Heart left ventricle (tissue), 16 donors: ENCODE measurements at regions of chr5 and their contacts with region 1.

Region 1: DNA sequence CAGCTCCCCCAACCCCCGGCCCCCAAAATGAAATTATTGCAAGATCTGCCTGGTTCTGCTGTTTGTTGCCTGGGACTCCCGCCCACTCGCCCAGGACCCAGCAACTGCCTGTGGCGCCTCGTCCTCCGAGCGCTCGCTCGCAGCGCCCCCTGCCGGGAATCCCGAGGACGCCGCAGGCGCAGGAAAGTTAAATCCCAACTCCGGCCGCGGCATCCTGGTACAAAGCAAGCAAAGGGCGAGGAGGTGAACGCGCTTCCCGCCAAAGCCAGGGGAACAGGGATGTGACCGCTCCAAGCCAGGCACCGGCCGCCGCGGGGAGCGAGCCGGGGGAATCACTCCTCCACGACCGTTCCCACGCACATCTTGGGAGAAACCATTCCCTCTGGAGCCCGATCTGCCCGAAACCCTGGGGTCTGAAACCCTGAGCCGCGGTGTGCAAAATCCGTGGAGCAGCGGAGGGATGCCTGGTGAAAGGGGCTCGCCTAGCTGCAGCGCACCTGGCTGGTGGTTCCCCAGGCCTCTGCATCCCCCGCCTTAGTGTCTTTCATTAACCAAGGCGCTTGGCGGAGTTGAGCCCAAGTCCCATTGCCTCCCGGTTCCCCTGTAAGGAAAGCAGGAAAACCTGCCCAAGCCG is 1.3 kb downstream of the SEMA5A start:
- DNase-seq: peak; percentile 83 to 92 (median 86)
- ATAC-seq: peak; percentile 72 to 78 (median 76)
- H3K4me3 ChIP-seq: peak overlapping the region; percentile 65 to 94 (median 78)
- H3K27ac ChIP-seq: peak overlapping the region; percentile 34 to 94 (median 83)
- H3K4me1 ChIP-seq: peaks cover 0 to 57% (median 12%) of the 10 kb centered on the region in 12 donors
- H3K27me3 ChIP-seq: peaks cover 0 to 29% (median 0%) of the 10 kb centered on the region in 9 donors
- CTCF ChIP-seq: peak; percentile 69 to 91 (median 78)
- POLR2A ChIP-seq: peak in 1 of 2 donors; percentile 39

Region 2: GRCh38 chr5:9156282-9156681 is 388.3 kb before region 1 on chr5:
- intact Hi-C with region 1: loop called in 3 of 10 experiments (anchors 10 kb)
- DNase-seq: peak in 2 of 5 donors; percentile 14 to 36
- ATAC-seq: peak in 3 of 4 donors; percentile 61 to 72 (median 70)
- H3K4me3 ChIP-seq: no peak overlapping the region
- H3K27ac ChIP-seq: no peak overlapping the region
- H3K4me1 ChIP-seq: peaks cover 0 to 13% (median 2%) of the 10 kb centered on the region in 12 donors
- H3K27me3 ChIP-seq: no peaks in the 10 kb centered on the region
- CTCF ChIP-seq: peak in 9 of 12 donors; percentile 8 to 51 (median 30)
- POLR2A ChIP-seq: no peak

Region 3: DNA sequence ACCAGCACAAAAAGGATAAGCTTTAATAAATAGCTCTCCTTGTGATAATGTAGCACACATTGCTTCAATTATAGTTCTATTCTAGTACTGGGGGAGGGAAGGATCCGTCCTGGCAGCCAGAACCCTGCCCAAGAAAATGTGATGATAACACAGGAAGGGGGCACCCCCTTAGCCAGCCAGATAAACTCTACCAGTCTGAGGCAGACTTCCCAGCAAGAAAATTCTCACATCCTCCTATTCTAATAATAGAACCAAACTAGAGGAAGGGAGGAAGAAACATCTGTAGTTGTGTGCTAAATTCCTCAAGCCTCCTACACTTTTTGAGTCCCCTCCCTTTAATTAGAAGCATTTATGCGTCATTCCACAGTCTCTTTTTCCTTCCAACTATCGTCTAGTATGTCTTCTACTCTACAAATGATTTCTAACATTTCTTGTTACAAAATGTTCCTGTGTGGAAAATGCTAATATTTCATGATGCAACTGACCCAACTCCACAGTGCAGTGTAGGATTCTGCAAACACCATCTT is 259.8 kb before region 1 on chr5:
- intact Hi-C with region 1: loop called in 5 of 10 experiments (anchors 5 to 10 kb)
- DNase-seq: peak in 4 of 5 donors; percentile 46 to 65 (median 52)
- ATAC-seq: peak; percentile 84 to 93 (median 90)
- H3K4me3 ChIP-seq: no peak overlapping the region
- H3K27ac ChIP-seq: peak overlapping the region; percentile 21 to 77 (median 60)
- H3K4me1 ChIP-seq: peaks cover 0 to 36% (median 15%) of the 10 kb centered on the region in 12 donors
- H3K27me3 ChIP-seq: no peaks in the 10 kb centered on the region
- CTCF ChIP-seq: no peak
- POLR2A ChIP-seq: no peak

Region 4: GRCh38 chr5:9437741-9438240 is 106.8 kb before region 1 on chr5:
- intact Hi-C with region 1: loop called in 1 of 10 experiments (anchors 10 kb)
- DNase-seq: no peak
- ATAC-seq: peak in 1 of 4 donors; percentile 33
- H3K4me3 ChIP-seq: no peak overlapping the region
- H3K27ac ChIP-seq: no peak overlapping the region
- H3K4me1 ChIP-seq: peaks cover 0 to 27% (median 12%) of the 10 kb centered on the region in 12 donors
- H3K27me3 ChIP-seq: no peaks in the 10 kb centered on the region
- CTCF ChIP-seq: no peak
- POLR2A ChIP-seq: no peak

Region 5: DNA sequence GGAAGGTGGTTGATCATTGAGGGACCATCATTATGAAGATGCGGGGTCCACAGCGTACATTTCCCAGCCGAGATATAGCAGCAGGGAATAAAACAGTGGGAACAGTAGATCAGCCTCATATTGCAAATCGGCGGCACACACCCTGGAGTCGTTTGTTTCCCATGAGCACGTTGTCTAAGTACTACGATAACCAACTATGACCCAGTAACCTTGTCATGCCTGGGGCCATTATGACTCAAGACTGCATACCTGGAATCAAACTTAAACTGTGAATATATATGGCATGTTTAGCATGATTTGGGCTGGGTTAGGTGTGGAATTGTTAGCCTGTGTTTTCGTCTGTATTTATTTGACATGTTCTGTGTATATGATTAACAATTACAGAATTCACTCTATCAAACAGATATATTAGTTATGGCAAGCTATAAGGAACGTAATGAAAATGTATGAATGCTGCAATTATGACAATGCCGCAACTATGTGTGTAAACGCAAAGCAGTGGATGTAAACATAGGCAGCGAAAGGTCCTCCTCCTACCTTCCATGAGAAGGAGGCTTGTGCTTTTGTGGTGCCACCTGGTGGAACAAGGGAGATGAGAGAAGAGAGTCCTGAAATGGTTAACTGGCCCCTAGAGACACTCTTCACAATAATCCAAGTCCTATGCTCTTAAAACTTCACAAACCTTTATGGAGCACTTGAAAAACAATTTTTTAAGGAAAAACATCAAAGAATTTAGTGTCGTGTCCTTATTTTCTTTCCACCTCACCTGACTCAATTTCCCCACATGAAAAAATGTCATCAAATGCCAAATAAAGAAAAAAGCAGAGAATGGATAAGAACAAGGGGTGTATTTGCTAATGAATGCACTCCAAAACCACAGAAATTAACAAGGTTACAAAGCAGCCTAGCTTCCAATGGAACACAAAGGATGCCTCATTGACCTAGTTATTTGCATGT is 45.8 kb before region 1 on chr5:
- intact Hi-C with region 1: loop called in 2 of 10 experiments (anchors 5 kb)
- DNase-seq: no peak
- ATAC-seq: no peak
- H3K4me3 ChIP-seq: no peak overlapping the region
- H3K27ac ChIP-seq: peak overlapping the region in 2 of 12 donors; percentile 7 to 32
- H3K4me1 ChIP-seq: peaks cover 0 to 40% (median 19%) of the 10 kb centered on the region in 12 donors
- H3K27me3 ChIP-seq: no peaks in the 10 kb centered on the region
- CTCF ChIP-seq: peak in 7 of 12 donors; percentile 12 to 40 (median 23)
- POLR2A ChIP-seq: no peak

Region 6: DNA sequence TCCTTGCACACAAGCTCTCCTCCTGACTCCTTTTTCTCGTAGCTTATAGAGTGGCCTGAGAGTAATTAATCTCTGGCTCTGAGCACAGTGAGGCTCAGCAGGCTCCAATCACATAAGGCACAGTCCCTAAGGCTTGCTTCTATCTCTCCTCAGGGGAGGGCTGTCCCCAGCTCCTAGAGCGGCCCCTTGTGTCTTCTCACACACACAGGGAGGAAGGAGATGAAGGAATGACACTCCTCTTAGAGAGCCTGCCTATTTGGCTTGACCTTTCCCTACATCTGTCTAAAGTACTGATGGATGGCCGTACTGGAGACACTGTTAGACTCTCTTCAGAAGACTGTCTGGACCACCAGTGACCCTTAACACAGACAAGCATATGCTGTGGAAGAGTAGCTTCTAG is 72.6 kb after region 1 on chr5:
- intact Hi-C with region 1: loop called in 3 of 10 experiments (anchors 5 kb)
- DNase-seq: no peak
- ATAC-seq: peak in 3 of 4 donors; percentile 28 to 45 (median 30)
- H3K4me3 ChIP-seq: no peak overlapping the region
- H3K27ac ChIP-seq: peak overlapping the region in 1 of 12 donors; percentile 14
- H3K4me1 ChIP-seq: peaks cover 0 to 19% (median 10%) of the 10 kb centered on the region in 12 donors
- H3K27me3 ChIP-seq: no peaks in the 10 kb centered on the region
- CTCF ChIP-seq: no peak
- POLR2A ChIP-seq: no peak

Region 7: GRCh38 chr5:9686211-9686610 is 141.6 kb after region 1 on chr5:
- intact Hi-C with region 1: no loop called
- DNase-seq: no peak
- ATAC-seq: no peak
- H3K4me3 ChIP-seq: no peak overlapping the region
- H3K27ac ChIP-seq: no peak overlapping the region
- H3K4me1 ChIP-seq: no peaks in the 10 kb centered on the region
- H3K27me3 ChIP-seq: no peaks in the 10 kb centered on the region
- CTCF ChIP-seq: no peak
- POLR2A ChIP-seq: no peak

Region 8: GRCh38 chr5:9834871-9835770 is 290.5 kb after region 1 on chr5:
- intact Hi-C with region 1: loop called in 1 of 10 experiments (anchors 10 kb)
- DNase-seq: no peak
- ATAC-seq: peak in 1 of 4 donors; percentile 42
- H3K4me3 ChIP-seq: no peak overlapping the region
- H3K27ac ChIP-seq: no peak overlapping the region
- H3K4me1 ChIP-seq: no peaks in the 10 kb centered on the region
- H3K27me3 ChIP-seq: no peaks in the 10 kb centered on the region
- CTCF ChIP-seq: peak in 5 of 12 donors; percentile 12 to 38 (median 13)
- POLR2A ChIP-seq: no peak